Activated T-helper 1 cell treated with anti-CD3 and anti-CD28 coated beads, Interleukin-12 subunit alpha, Interleukin-12 subunit beta, Interleukin-2, Interleukin-4 antibody, amounts not matched to agents 30 ng/mL and 10 ng/mL and 1 ng/mL, durations not matched to agents 14 hours and 24 hours and 36 hours (primary cell): ENCODE measurements at regions of chr18 and their contacts with region 1.

Region 1: DNA sequence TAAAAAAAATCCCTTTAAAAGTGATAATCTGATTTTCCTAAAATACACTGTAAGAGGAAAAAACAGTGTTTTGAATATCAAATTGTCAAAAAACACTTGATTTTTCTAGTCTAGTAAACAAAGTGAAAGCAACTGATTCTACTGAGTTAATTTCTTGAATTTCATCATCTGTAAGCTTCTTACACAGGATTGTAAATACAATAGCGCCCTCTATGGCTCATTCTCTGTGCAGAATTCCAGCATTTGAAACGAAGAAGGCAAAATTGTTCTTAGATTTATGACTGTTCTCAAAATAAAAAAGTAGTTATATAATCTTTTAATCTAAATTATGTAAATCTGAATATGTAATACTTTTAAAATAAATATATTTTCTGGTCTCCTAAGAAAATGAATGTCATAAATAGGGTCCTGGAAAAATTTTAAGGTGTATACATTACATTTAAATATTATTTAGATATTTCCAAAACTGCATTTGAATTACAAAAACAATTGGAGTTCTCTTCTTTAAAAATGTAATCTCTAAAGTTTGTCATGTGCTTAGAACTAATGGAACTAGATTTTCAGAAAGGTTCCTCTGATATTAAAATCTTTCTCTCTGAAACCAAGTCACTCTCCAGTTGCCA is 176.9 kb upstream of the MC4R start:
- DNase-seq: no peak
- H3K4me3 Mint-ChIP-seq: no peak overlapping the region
- H3K27ac Mint-ChIP-seq: no peak overlapping the region
- H3K4me1 Mint-ChIP-seq: no peaks in the 10 kb centered on the region
- H3K27me3 Mint-ChIP-seq: no peaks in the 10 kb centered on the region

Region 2: DNA sequence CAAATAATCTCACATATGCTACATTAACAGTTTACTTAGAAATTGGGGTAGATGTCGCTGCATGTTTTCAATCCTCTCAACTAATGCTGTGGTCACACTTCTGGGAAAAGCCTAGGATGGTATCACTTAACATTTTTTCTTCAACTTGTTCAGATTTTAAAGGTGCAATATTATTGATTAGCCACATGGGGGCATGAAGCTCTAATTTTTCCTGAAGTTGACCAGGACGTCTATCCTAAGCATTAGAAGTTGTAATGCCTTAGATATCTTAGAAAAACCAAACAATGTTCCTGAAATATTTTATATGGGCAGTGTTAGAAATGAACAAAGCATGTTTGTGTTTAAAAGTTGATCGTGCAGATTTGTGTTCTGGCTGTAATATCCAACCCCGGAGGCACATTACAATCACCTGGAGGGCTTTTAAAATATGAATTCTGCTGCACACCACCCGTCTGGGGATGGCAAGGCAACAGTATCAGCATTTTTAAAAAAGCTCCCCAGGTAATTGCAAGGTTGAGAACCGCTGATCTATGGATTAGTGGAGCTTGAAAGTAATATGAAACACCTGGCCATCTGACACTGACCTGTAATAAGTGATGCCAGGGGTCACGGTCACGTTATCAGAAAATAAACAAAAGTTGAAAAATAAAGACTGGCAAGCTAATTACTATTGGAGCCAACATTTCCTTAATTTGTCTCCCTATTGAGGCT is 1089.9 kb before region 1 on chr18:
- intact Hi-C with region 1: loop called (anchors 1 kb)
- DNase-seq: no peak
- H3K4me3 Mint-ChIP-seq: no peak overlapping the region
- H3K27ac Mint-ChIP-seq: no peak overlapping the region
- H3K4me1 Mint-ChIP-seq: no peaks in the 10 kb centered on the region
- H3K27me3 Mint-ChIP-seq: peaks cover 2% of the 10 kb centered on the region

Region 3: GRCh38 chr18:59697236-59697932 is 852.1 kb before region 1 on chr18 and contains the start of gene CCBE1:
- intact Hi-C with region 1: loop called (anchors 5 kb)
- DNase-seq: peak; percentile 22
- H3K4me3 Mint-ChIP-seq: peak within 1 kb of the TSS; percentile 23
- H3K27ac Mint-ChIP-seq: no peak within 1 kb of the TSS
- H3K4me1 Mint-ChIP-seq: peaks cover 5% of the 10 kb centered on the region
- H3K27me3 Mint-ChIP-seq: peaks cover 65% of the 10 kb centered on the region
- total RNA-seq, gene CCBE1: 0.02 TPM in 1 of 2 replicates, not detected in the other

Region 4: DNA sequence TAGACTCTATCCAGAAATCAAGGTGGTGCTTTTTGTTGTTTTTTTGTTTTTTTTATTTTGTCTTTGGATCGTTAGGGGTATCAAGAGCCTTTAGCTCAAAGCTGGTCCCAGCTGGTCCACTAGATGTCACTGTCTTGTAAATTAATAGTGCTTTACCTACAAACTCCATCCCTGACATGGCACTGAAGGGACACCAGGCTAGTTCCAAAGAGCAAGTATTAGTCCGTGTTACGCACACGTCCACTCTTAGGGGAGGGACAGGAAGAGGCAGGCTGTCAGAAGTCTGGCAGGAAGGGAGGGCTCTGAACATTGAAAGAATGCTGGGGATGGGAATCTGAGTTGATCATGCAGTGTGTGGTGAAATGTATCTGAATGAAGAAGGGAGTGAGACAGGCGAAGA is 766.3 kb before region 1 on chr18:
- intact Hi-C with region 1: loop called (anchors 1 kb)
- DNase-seq: no peak
- H3K4me3 Mint-ChIP-seq: no peak overlapping the region
- H3K27ac Mint-ChIP-seq: no peak overlapping the region
- H3K4me1 Mint-ChIP-seq: no peaks in the 10 kb centered on the region
- H3K27me3 Mint-ChIP-seq: peaks cover 3% of the 10 kb centered on the region

Region 5: GRCh38 chr18:59837586-59837985 is 711.9 kb before region 1 on chr18:
- intact Hi-C with region 1: loop called (anchors 1 kb)
- DNase-seq: peak; percentile 34
- H3K4me3 Mint-ChIP-seq: no peak overlapping the region
- H3K27ac Mint-ChIP-seq: no peak overlapping the region
- H3K4me1 Mint-ChIP-seq: peaks cover 20% of the 10 kb centered on the region
- H3K27me3 Mint-ChIP-seq: peaks cover 14% of the 10 kb centered on the region

Region 6: GRCh38 chr18:59988098-59988706 is 561.2 kb before region 1 on chr18:
- intact Hi-C with region 1: loop called (anchors 1 kb)
- DNase-seq: no peak
- H3K4me3 Mint-ChIP-seq: no peak overlapping the region
- H3K27ac Mint-ChIP-seq: no peak overlapping the region
- H3K4me1 Mint-ChIP-seq: no peaks in the 10 kb centered on the region
- H3K27me3 Mint-ChIP-seq: peaks cover 26% of the 10 kb centered on the region